Activated B cell treated with CpG ODN at 0.5 μM for 24 hours (primary cell): ENCODE measurements at regions of chr20 and their contacts with region 1.

Region 1: DNA sequence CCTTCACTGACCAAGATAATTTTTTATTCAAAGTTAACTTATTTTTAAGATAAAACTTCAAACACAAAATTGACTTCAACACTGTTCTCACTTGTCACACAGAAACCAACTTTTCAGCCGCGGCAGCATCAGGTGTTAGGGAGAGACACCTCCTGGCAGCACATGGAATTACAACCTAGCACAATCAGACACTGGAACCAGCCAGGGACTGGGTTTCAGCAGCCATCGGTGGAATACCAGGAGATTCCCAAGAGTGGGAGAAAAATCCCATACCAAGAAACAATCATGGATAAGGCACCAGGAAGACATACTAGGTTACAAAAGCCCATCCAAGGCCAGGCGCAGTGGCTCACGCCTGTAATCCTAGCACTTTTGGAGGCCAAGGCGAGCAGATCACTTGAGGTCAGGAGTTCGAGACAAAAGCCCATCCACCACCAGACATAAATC is 70.0 kb downstream of the SNX5 start:
- DNase-seq: no peak
- ATAC-seq: peak; percentile 78
- H3K4me3 Mint-ChIP-seq: no peak overlapping the region
- H3K27ac Mint-ChIP-seq: no peak overlapping the region
- H3K4me1 Mint-ChIP-seq: peaks cover 53% of the 10 kb centered on the region
- H3K27me3 Mint-ChIP-seq: peaks cover 16% of the 10 kb centered on the region
- CTCF ChIP-seq: peak; percentile 93

Region 2: GRCh38 chr20:17654649-17655285 is 243.8 kb before region 1 on chr20:
- CTCF ChIA-PET with region 1: interaction called, 3 read pairs
- POLR2A ChIA-PET with region 1: no interaction called
- intact Hi-C with region 1: loop called (anchors 1 kb)
- DNase-seq: no peak
- ATAC-seq: no peak
- H3K4me3 Mint-ChIP-seq: no peak overlapping the region
- H3K27ac Mint-ChIP-seq: no peak overlapping the region
- H3K4me1 Mint-ChIP-seq: peaks cover 6% of the 10 kb centered on the region
- H3K27me3 Mint-ChIP-seq: no peaks in the 10 kb centered on the region
- CTCF ChIP-seq: no peak

Region 3: DNA sequence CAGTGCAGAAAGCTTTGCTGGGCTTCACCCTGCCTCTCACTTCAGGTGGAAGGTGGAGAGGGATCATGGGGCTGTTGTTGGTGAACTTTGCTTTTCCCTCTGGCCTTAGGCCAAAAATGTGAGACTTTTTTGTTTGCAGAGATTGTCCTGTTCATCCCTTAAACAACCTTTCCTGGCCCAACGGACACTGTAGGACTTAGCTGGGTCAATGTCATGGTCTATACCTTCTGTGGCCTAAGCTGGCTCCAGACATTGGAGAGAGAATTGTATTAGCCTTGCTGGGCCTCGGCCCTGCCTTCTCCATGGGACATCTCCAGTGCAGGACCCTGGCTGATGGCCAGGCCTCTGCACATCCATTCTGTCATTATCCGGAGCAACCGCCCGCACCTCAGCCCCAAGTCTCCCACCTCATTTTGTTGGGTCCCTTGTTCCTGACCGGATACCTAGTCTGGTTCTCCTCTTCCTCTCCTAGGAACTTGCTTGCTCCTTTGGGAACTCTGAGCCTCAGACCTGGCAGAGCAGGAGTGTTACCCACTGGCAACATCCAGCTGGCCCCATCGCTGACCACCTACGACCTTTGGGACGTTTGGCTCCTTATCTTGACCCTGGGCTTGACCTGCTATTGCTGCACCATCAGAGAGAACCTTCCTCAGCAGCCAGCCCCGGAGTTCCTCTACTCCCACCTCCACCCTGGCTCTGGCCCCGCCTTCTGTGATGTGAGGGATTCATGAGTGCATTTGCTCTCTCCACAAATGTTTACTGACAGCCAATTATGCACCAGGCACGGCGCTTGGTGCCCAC is 70.6 kb before region 1 on chr20:
- CTCF ChIA-PET with region 1: no interaction called
- POLR2A ChIA-PET with region 1: no interaction called
- intact Hi-C with region 1: no loop called
- DNase-seq: no peak
- ATAC-seq: no peak
- H3K4me3 Mint-ChIP-seq: no peak overlapping the region
- H3K27ac Mint-ChIP-seq: no peak overlapping the region
- H3K4me1 Mint-ChIP-seq: peaks cover 4% of the 10 kb centered on the region
- H3K27me3 Mint-ChIP-seq: peaks cover 2% of the 10 kb centered on the region
- CTCF ChIP-seq: no peak

Region 4: DNA sequence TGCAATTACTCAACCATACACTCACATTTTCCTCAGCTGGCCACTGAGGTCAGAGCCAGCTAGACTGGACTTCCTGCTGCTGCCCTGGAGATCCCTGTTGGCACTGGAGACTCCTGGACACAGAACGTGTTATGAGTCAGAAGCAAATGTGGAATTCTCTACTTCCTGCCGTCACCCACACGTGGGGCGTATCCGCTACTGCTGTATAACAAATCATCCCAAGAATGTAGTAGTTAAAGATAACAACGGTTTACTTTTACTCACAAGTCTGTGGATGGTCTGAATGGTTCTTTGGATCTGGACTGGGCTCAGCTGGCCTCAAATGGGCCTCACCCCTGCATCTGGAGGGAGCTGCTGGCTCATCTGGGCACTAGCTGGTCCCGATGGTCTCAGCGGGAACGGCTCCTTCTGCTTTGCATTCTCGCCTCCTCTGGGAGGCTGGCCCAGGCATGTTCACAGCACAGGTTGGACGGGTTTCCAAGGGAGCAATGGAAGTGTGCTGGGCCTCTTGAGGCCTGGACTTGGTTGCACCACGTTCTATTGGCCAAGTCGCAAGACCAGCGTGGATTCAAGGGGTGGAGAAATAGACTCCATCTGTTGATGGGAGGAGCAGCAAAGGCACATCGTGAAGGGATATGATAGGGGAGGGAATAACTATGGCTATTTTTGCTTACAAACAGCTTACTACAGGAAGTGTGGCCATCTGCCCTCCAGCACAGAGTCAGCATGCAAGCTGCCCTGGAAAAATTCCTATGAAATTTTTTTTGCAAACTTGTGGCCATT is 48.5 kb before region 1 on chr20:
- CTCF ChIA-PET with region 1: no interaction called
- POLR2A ChIA-PET with region 1: no interaction called
- intact Hi-C with region 1: no loop called
- DNase-seq: no peak
- ATAC-seq: no peak
- H3K4me3 Mint-ChIP-seq: no peak overlapping the region
- H3K27ac Mint-ChIP-seq: peak overlapping the region; percentile 32
- H3K4me1 Mint-ChIP-seq: peaks cover 67% of the 10 kb centered on the region
- H3K27me3 Mint-ChIP-seq: no peaks in the 10 kb centered on the region
- CTCF ChIP-seq: no peak

Region 5: DNA sequence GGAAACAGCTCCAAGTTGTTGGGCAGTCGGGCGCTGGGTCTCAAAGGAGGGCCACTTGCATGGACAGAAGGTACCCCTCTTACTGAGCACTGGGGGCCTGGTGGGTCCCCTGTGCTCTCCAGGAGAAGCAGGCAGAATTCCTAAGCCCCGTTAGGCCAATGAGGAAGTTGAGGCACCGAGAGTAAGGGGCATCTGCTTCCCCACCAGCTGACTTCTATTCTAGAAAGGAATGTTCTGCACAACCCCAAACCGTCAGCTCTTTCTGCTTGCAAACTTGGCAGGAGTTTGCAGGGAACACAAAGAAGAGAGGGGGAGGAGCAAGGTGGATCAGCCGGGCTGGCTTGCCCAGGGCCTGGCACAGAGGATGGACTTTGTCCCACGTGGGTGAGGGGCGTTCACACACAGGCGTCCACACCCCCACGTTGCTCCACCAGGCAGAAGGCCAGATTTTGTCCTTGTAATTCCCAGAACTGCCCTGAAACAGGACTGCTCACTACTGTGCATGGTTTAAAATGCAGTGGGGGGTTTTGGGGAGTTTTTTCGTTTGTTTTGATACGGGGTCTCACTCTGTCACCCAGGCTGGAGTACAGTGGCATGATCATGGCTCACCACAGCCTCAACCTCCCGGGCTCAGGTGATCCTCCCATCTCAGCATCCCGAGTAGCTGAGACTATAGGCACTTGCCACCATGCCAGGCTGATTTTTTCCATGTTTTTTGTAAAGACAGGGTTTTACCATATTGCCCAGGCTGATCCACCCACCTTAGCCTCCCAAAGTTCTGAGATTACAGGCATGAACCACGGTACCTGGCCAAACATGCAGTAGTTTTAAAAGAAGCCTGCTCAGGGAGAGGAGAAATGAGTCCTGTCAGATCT is 23.2 kb before region 1 on chr20:
- CTCF ChIA-PET with region 1: interaction called, 3 read pairs
- POLR2A ChIA-PET with region 1: interaction called, 8 read pairs
- intact Hi-C with region 1: loop called (anchors 1 kb)
- DNase-seq: no peak
- ATAC-seq: no peak
- H3K4me3 Mint-ChIP-seq: no peak overlapping the region
- H3K27ac Mint-ChIP-seq: no peak overlapping the region
- H3K4me1 Mint-ChIP-seq: peaks cover 63% of the 10 kb centered on the region
- H3K27me3 Mint-ChIP-seq: peaks cover 1% of the 10 kb centered on the region
- CTCF ChIP-seq: no peak

Region 6: DNA sequence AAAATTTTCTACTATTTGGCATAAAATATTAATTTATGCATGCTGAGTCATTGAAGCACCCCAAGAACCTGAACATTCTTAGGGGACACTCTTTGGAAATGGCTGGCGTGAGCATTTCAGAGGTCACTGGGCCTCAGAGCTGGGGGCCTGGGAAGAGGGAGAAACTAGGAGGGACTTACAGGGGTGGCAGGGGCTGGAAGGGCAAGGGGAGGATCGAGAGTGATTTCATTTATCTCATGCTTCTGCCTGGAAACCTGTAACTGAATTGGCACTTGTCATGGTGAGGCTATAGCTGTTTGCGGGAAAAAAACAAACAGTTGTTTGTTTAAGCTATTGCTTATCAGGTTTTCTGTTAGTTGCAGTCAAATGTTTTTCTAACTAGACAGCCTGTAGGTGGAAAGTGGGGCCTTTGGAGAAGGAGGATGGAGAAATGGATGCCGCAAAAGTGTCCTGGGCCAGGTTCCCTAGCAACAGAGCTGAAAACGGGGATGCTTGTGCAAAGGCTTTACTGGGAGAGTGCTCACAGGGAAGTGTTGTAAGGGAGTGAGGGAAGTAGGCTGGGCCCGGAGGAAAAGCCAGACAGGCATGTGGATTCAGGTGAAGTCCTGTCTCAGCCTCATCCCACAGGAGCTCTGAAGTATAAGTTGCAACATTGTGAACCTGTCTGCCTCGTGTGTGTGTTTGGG is 202.7 kb after region 1 on chr20:
- CTCF ChIA-PET with region 1: no interaction called
- POLR2A ChIA-PET with region 1: no interaction called
- intact Hi-C with region 1: no loop called
- DNase-seq: no peak
- ATAC-seq: no peak
- H3K4me3 Mint-ChIP-seq: no peak overlapping the region
- H3K27ac Mint-ChIP-seq: no peak overlapping the region
- H3K4me1 Mint-ChIP-seq: no peaks in the 10 kb centered on the region
- H3K27me3 Mint-ChIP-seq: peaks cover 24% of the 10 kb centered on the region
- CTCF ChIP-seq: no peak